ENCODE measurements at regions of chr17 and their contacts with region 1.

Region 1: GRCh38 chr17:28240991-28241340 is 78.0 kb upstream of the TMEM97 start:
- DNase-seq: no peak
- H3K4me3 Mint-ChIP-seq: no peak overlapping the region
- H3K27ac Mint-ChIP-seq: no peak overlapping the region
- H3K4me1 Mint-ChIP-seq: no peaks in the 10 kb centered on the region
- H3K27me3 Mint-ChIP-seq: peaks cover 2% of the 10 kb centered on the region

Region 2: GRCh38 chr17:28225271-28225670 is 15.7 kb before region 1 on chr17:
- CTCF ChIA-PET with region 1: no interaction called
- POLR2A ChIA-PET with region 1: no interaction called
- DNase-seq: no peak
- H3K4me3 Mint-ChIP-seq: no peak overlapping the region
- H3K27ac Mint-ChIP-seq: no peak overlapping the region
- H3K4me1 Mint-ChIP-seq: peaks cover 17% of the 10 kb centered on the region
- H3K27me3 Mint-ChIP-seq: peaks cover 31% of the 10 kb centered on the region

Region 3: GRCh38 chr17:28252436-28252835 is 11.5 kb after region 1 on chr17:
- CTCF ChIA-PET with region 1: interaction called, 11 read pairs
- POLR2A ChIA-PET with region 1: no interaction called
- DNase-seq: no peak
- H3K4me3 Mint-ChIP-seq: no peak overlapping the region
- H3K27ac Mint-ChIP-seq: no peak overlapping the region
- H3K4me1 Mint-ChIP-seq: peaks cover 9% of the 10 kb centered on the region
- H3K27me3 Mint-ChIP-seq: peaks cover 10% of the 10 kb centered on the region